Natural killer cell (primary cell): ENCODE measurements at regions of chr1 and their contacts with region 1.

Region 1: GRCh38 chr1:206551986-206552326 is 44.6 kb downstream of the RASSF5 start:
- DNase-seq: peak; percentile 86 to 94
- ATAC-seq: peak; percentile 81 to 94 (median 91)
- H3K4me3 ChIP-seq: no peak overlapping the region
- H3K4me3 Mint-ChIP-seq: peak overlapping the region; percentile 86
- H3K27ac ChIP-seq: peak overlapping the region; percentile 93
- H3K27ac Mint-ChIP-seq: peak overlapping the region; percentile 90 to 100
- H3K4me1 ChIP-seq: peaks cover 53% of the 10 kb centered on the region
- H3K4me1 Mint-ChIP-seq: peaks cover 64 to 68% of the 10 kb centered on the region in 2 donors
- H3K27me3 ChIP-seq: no peaks in the 10 kb centered on the region
- H3K27me3 Mint-ChIP-seq: no peaks in the 10 kb centered on the region
- CTCF ChIP-seq: no peak

Region 2: DNA sequence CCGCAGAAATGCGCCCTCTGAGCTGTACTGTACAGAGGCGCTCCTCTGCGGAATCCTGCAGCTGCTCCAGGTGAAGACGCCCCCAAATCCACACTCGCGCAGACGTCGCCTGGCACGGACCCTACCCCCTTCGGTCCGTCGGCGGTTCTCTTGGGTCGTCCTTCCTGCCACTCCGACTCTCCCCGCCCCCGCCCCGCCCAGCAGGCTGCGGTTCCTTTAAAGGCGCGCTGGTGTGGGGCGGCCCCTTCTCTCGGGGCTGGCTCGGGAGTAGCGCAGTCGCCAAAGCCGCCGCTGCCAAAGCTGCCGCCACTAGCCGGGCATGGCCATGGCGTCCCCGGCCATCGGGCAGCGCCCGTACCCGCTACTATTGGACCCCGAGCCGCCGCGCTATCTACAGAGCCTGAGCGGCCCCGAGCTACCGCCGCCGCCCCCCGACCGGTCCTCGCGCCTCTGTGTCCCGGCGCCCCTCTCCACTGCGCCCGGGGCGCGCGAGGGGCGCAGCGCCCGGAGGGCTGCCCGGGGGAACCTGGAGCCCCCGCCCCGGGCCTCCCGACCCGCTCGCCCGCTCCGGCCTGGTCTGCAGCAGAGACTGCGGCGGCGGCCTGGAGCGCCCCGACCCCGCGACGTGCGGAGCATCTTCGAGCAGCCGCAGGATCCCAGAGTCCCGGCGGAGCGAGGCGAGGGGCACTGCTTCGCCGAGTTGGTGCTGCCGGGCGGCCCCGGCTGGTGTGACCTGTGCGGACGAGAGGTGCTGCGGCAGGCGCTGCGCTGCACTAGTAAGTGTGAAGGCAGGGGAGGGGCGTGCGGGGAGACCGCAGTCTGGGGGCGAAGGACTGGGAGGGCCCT is 44.4 kb before region 1 on chr1 and contains the start of gene RASSF5:
- intact Hi-C with region 1: loop called (anchors 5 kb)
- DNase-seq: peak; percentile 78 to 81
- ATAC-seq: peak; percentile 75 to 90 (median 84)
- H3K4me3 ChIP-seq: peak within 1 kb of the TSS; percentile 57
- H3K4me3 Mint-ChIP-seq: peak within 1 kb of the TSS; percentile 82
- H3K27ac ChIP-seq: no peak within 1 kb of the TSS
- H3K27ac Mint-ChIP-seq: peak within 1 kb of the TSS; percentile 50 to 81
- H3K4me1 ChIP-seq: peaks cover 43% of the 10 kb centered on the region
- H3K4me1 Mint-ChIP-seq: peaks cover 38 to 52% of the 10 kb centered on the region in 2 donors
- H3K27me3 ChIP-seq: peaks cover 10% of the 10 kb centered on the region
- H3K27me3 Mint-ChIP-seq: peaks cover 0 to 6% of the 10 kb centered on the region in 2 donors
- CTCF ChIP-seq: no peak
- total RNA-seq, gene RASSF5: 231 to 333 (median 279) TPM

Region 3: DNA sequence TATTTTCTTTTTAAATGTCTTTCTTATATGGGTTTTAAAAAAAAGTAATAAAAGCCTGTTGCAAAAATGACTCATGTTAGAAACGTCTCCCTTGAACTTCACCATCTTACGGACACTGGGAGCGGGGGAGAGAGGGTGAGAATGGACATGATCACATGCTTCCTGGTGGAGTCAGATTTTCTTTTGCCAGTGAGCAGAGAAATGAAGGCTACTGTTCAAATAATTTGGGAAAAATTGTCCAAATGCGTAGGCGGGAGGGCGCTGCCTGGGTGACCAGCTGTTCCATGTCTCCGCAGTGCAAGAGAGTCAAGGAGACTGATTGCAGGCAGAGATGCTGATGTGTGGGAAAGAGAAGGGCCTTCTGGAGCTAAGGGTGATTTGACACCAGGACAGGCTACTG is 37.2 kb after region 1 on chr1:
- intact Hi-C with region 1: no loop called
- DNase-seq: no peak
- ATAC-seq: no peak
- H3K4me3 ChIP-seq: no peak overlapping the region
- H3K4me3 Mint-ChIP-seq: no peak overlapping the region
- H3K27ac ChIP-seq: peak overlapping the region; percentile 61
- H3K27ac Mint-ChIP-seq: peak overlapping the region; percentile 89 to 90
- H3K4me1 ChIP-seq: peaks cover 30% of the 10 kb centered on the region
- H3K4me1 Mint-ChIP-seq: peaks cover 58 to 65% of the 10 kb centered on the region in 2 donors
- H3K27me3 ChIP-seq: no peaks in the 10 kb centered on the region
- H3K27me3 Mint-ChIP-seq: no peaks in the 10 kb centered on the region
- CTCF ChIP-seq: no peak

Region 4: GRCh38 chr1:207499573-207499972 is 947.6 kb after region 1 on chr1:
- intact Hi-C with region 1: no loop called
- DNase-seq: peak; percentile 41 to 87
- ATAC-seq: peak; percentile 73 to 84 (median 77)
- H3K4me3 ChIP-seq: no peak overlapping the region
- H3K4me3 Mint-ChIP-seq: no peak overlapping the region
- H3K27ac ChIP-seq: no peak overlapping the region
- H3K27ac Mint-ChIP-seq: no peak overlapping the region
- H3K4me1 ChIP-seq: peaks cover 11% of the 10 kb centered on the region
- H3K4me1 Mint-ChIP-seq: peaks cover 0 to 9% of the 10 kb centered on the region in 2 donors
- H3K27me3 ChIP-seq: peaks cover 31% of the 10 kb centered on the region
- H3K27me3 Mint-ChIP-seq: peaks cover 42 to 59% of the 10 kb centered on the region in 2 donors
- CTCF ChIP-seq: peak; percentile 66